ENCODE measurements at regions of chr13 and their contacts with region 1.

Region 1: GRCh38 chr13:110306960-110307746 is at the starts of genes COL4A1 and COL4A2:
- DNase-seq: peak in 6 of 10 donors; percentile 26 to 89 (median 70)

Region 2: GRCh38 chr13:110361365-110361911 is 54.3 kb after region 1 on chr13:
- intact Hi-C with region 1: loop called (anchors 10 kb)
- DNase-seq: no peak

Region 3: GRCh38 chr13:110525328-110526319 is 218.5 kb after region 1 on chr13:
- intact Hi-C with region 1: no loop called
- DNase-seq: peak in 2 of 10 donors; percentile 39 to 64